ENCODE measurements at regions of chr3 and their contacts with region 1.

Region 1: GRCh38 chr3:16247276-16248061 is 17.3 kb downstream of the DPH3 start:
- DNase-seq: peak; percentile 49 to 81
- H3K4me3 ChIP-seq: no peak overlapping the region
- H3K27ac ChIP-seq: no peak overlapping the region
- H3K4me1 ChIP-seq: 0 out of 7 replicates have a peak, but pooled peaks cover 0 to 4% (median 0%) of the 10 kb centered on the region in 4 experiments
- H3K27me3 ChIP-seq: no peaks in the 10 kb centered on the region
- CTCF ChIP-seq: peak; percentile 77 to 93 (median 93)
- EP300 ChIP-seq: no peak
- POLR2A ChIP-seq: no peak
- RAD21 ChIP-seq: peak; percentile 95

Region 2: DNA sequence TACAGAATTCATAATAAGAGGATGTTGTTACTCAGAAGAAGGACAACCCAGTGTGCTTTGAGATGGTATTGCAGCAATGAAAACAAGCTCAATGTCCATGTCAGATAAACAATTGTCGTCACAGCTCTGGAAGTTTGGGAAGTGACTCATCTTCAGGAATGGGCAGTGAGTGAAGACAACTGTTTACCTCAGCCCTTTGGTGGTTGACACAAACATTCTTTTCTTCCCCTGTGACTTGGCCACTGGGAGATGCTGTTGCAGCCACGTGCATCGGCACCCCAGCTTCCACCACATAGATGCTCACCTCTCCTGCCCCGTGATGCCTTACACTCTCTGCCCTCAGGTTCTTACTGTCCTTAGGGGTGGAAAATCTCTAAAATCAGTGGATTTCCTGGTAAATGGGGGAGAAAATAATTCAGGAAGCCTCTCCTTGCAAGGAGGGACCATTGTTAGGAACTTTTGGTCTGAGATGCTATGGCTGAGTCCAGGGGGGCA is 187.1 kb before region 1 on chr3:
- CTCF ChIA-PET with region 1: interaction called, 11 read pairs
- POLR2A ChIA-PET with region 1: no interaction called
- DNase-seq: peak in 1 of 2 experiments; percentile 38
- H3K4me3 ChIP-seq: no peak overlapping the region
- H3K27ac ChIP-seq: no peak overlapping the region
- H3K4me1 ChIP-seq: no peaks in the 10 kb centered on the region
- H3K27me3 ChIP-seq: no peaks in the 10 kb centered on the region
- CTCF ChIP-seq: peak in 2 of 3 experiments; percentile 26; a peak in 2 of 4 replicates
- EP300 ChIP-seq: no peak
- POLR2A ChIP-seq: no peak
- RAD21 ChIP-seq: peak in 1 of 2 experiments; percentile 18; a peak in 2 of 4 replicates

Region 3: DNA sequence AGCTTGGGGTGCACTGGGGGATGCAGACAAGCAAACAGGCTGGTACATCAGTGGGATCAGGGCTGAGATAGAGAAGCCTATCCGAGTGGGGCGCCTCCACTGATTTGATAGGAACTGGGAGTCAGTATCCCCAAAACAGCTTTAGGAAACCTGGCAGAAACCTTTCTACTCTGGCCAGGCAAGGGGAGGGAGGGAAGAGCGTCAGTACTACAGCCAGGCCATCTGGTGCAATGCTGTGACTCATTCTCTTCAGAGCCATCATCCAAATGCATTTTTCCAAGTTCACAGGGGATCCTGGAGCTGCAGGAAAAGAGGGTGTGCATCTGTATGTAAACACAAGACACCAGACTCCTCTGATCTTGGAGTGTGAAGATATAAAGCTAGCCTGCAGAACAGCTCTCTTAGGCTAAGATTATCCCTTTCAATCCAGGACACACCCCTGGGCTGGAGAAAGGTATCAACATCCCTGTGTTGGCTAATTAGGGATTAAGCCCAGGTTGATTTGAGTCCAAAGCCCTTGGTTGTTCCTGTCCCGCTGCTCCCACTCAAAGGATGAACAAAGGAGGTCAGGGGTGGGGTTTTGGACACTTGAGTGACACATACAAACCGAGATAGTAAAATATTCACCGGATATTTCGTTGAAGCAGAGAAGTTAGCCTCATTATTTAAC is 63.7 kb before region 1 on chr3:
- CTCF ChIA-PET with region 1: interaction called, 13 read pairs
- POLR2A ChIA-PET with region 1: no interaction called
- DNase-seq: no peak
- H3K4me3 ChIP-seq: no peak overlapping the region
- H3K27ac ChIP-seq: no peak overlapping the region
- H3K4me1 ChIP-seq: peaks cover 0 to 3% (median 0%) of the 10 kb centered on the region in 4 experiments; a peak in 1 of 7 replicates
- H3K27me3 ChIP-seq: no peaks in the 10 kb centered on the region
- CTCF ChIP-seq: no peak
- EP300 ChIP-seq: no peak
- POLR2A ChIP-seq: no peak
- RAD21 ChIP-seq: no peak

Region 4: GRCh38 chr3:16231983-16232382 is 15.5 kb before region 1 on chr3:
- CTCF ChIA-PET with region 1: interaction called, 13 read pairs
- POLR2A ChIA-PET with region 1: interaction called, 4 read pairs
- DNase-seq: no peak
- H3K4me3 ChIP-seq: no peak overlapping the region
- H3K27ac ChIP-seq: no peak overlapping the region
- H3K4me1 ChIP-seq: no peaks in the 10 kb centered on the region
- H3K27me3 ChIP-seq: no peaks in the 10 kb centered on the region
- CTCF ChIP-seq: no peak
- EP300 ChIP-seq: no peak
- POLR2A ChIP-seq: no peak
- RAD21 ChIP-seq: no peak